Dendritic cell treated with granulocyte-macrophage colony-stimulating factor and Interleukin-4, amounts not matched to agents 40 ng/mL and 50 ng/mL, for 4 days (primary cell): ENCODE measurements at regions of chr3 and their contacts with region 1.

Region 1: DNA sequence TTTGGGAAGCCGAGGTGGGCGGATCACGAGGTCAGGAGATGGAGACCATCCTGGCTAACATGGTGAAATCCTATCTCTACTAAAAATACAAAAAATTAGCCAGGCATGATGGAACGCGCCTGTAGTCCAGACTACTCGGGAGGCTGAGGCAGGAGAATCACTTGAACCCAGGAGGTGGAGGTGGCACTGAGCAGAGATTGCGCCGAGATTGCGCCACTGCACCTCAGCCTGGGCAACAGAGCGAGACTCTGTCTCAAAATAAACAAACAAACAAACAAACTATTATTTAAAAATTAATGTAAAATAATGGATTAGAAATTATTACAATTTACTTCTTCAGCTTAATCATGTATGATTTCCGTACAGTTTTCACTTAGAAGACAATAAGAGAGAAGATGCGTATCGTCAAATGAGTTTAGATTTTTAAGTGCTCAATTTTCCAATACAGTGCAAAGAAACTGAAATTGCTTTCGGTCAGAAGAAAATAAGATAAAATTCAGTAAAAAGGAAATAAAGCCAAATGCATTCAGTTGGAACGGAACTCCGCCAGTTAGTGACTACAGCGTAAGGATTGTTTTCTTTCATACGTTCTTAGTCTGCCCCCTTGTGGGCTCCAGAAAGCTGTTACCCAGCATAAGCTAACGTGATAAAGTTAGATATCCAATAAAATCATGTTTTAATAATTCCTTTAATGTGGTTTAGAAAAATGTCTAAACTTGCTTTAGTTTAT is 24.8 kb downstream of the AADAC start:
- H3K4me3 Mint-ChIP-seq: no peak overlapping the region
- H3K27ac Mint-ChIP-seq: no peak overlapping the region
- H3K4me1 Mint-ChIP-seq: peaks cover 18% of the 10 kb centered on the region
- H3K27me3 Mint-ChIP-seq: no peaks in the 10 kb centered on the region

Region 2: DNA sequence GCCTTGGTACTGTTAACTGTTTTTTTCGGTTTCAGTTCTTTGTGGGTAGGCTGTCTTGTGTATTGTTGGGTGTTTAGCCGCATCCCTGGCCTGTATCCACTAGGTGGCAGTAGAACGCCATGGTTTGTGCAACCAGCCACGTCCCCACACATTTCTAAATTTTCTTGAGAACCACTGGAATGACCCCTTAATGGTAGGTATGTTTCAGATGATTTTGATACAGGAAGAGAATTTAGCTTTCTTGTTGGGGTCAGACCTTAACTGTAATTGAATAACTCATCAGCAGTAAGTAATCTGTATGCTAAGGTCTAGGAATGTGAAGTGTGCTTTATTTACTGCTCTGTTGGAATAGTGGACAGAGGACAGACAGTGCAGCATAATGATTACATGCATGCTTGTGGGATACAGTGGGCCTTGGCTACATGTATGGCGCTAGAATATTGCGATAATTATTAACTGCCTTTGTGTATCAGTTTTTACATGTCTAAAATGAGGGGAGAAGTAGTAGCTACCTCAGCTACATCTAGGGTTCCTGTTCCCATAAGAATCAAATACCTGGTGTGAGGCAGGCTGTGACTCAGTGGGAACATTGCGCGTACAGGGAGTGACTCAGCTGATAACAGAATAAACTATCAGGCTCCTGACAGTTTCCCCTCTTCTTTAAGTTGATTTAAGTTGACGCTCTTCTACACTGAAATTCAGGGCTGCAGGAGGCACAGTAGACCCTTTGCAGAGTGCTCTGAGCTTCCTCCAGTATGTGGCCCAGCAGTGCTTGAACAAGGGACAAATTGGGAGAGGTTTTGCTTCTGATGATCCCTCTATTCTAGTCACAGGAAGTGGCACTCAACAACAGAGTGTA is 610.7 kb before region 1 on chr3:
- intact Hi-C with region 1: loop called (anchors 5 kb)
- H3K4me3 Mint-ChIP-seq: peak overlapping the region; percentile 13
- H3K27ac Mint-ChIP-seq: peak overlapping the region; percentile 80
- H3K4me1 Mint-ChIP-seq: peaks cover 75% of the 10 kb centered on the region
- H3K27me3 Mint-ChIP-seq: no peaks in the 10 kb centered on the region

Region 3: DNA sequence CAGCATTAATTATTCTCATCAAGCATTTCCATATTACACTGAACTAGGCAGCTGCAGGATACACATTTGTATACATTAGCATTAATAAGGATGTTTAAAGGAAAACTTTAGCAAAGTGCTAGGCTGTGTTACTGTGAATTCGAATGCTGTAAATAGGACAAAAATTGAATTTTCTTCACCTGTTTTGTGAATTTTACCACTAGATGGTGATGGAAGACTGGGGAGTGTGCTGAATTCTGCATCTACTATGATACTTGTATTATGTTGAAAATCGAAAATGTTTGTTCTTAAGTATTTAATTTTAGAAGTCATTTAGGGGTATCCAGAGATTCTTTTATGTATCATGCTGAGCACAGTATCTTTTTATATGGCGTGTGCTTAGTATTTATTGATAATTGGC is 548.1 kb before region 1 on chr3:
- intact Hi-C with region 1: loop called (anchors 2 kb)
- H3K4me3 Mint-ChIP-seq: no peak overlapping the region
- H3K27ac Mint-ChIP-seq: no peak overlapping the region
- H3K4me1 Mint-ChIP-seq: peaks cover 22% of the 10 kb centered on the region
- H3K27me3 Mint-ChIP-seq: no peaks in the 10 kb centered on the region

Region 4: GRCh38 chr3:151439652-151440129 is 399.1 kb before region 1 on chr3:
- intact Hi-C with region 1: loop called (anchors 1 kb)
- H3K4me3 Mint-ChIP-seq: no peak overlapping the region
- H3K27ac Mint-ChIP-seq: no peak overlapping the region
- H3K4me1 Mint-ChIP-seq: no peaks in the 10 kb centered on the region
- H3K27me3 Mint-ChIP-seq: no peaks in the 10 kb centered on the region

Region 5: DNA sequence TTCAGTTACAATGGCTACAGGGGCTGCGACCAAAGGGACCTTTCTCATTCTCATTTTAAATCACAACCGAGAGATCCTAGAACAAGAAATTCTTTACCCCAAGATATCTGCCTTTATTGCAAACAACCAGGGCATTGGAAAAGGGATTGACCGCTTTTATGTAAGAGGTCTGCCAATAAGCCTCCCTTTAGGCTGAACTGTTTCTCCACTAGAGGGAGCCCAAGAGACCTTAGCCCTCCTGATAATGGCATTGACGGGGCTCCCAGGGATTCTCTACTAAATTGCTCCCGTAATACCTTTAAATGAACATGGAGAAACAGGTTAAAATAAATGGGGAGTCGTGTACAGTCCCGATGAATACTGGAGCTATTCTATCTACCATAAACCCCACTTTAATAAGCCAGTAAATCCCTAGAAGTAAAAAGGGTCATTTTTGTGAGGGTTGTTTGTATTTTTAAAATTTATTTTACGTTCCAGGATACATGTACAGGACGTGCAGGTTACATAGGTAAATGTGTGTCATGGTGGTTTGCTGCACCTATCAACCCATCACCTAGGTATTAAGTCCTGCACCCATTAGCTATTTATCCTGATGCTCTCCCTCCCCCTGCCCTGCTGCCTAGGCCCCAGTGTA is 370.3 kb before region 1 on chr3:
- intact Hi-C with region 1: loop called (anchors 2 kb)
- H3K4me3 Mint-ChIP-seq: no peak overlapping the region
- H3K27ac Mint-ChIP-seq: no peak overlapping the region
- H3K4me1 Mint-ChIP-seq: no peaks in the 10 kb centered on the region
- H3K27me3 Mint-ChIP-seq: no peaks in the 10 kb centered on the region

Region 6: DNA sequence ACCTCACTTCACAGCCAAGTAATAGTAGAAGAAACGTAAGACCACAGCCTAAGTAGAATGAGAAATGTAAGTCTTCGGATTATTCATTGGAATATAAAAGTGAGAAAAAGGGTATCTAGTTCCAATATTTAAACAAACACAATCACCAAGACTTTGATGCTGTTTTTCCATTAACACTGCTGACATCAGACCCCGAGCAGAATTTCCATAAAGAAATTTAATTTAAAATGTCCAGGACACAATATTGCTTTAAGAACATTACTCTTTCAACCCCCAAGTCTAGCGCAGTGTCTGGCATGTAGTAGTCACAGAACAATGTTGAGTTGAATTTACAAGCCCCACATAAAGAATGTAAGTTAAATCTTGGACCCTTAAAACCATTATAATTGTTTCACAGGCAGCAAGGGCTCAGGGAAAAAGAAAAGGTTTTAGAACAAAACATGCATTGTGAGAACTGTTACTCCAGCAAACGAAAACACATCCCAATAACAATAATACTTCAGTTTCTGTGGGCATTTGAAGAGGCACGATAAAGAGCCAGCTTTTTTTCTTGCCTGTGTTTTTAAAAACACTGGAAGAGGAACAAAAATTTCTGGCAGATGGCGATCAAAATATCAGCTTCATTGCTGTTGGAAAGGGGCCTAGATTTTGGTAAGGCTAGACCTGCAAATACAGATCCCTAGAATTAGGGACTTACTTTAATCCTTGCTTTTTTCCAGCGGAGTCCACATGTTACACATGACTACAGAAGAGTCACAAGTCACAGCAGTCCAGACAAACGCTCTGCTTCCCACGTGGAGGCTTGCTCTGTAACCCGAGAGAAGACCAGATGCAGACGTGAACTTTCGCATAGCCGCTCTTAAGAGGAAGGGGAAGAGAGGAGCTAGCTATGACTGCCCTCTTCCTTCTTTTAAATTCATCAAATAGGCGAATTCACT is 300.0 kb before region 1 on chr3:
- intact Hi-C with region 1: no loop called
- H3K4me3 Mint-ChIP-seq: peak overlapping the region; percentile 20
- H3K27ac Mint-ChIP-seq: no peak overlapping the region
- H3K4me1 Mint-ChIP-seq: no peaks in the 10 kb centered on the region
- H3K27me3 Mint-ChIP-seq: no peaks in the 10 kb centered on the region

Region 7: DNA sequence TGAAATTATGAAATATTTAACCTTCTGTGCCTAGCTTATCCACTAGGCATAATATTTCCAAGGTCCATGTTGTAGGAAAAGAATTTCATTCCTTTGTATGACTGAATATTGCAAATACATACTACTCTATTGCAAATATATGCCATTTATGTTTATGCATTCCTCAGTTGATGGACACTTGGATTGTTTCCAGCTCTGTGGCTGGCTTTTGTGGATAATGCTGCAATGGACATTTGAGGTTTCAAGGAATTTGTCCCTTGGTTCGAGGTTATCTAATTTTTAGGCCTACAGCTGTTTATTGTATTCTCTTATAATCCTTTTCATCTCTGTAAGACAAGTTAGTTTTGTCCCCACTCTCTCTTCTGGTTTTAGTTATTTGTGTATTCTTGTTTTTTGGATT is 112.7 kb before region 1 on chr3:
- intact Hi-C with region 1: no loop called
- H3K4me3 Mint-ChIP-seq: no peak overlapping the region
- H3K27ac Mint-ChIP-seq: no peak overlapping the region
- H3K4me1 Mint-ChIP-seq: no peaks in the 10 kb centered on the region
- H3K27me3 Mint-ChIP-seq: no peaks in the 10 kb centered on the region